Activated CD4-positive, alpha-beta T cell treated with anti-CD3 and anti-CD28 coated beads for 36 hours (primary cell): ENCODE measurements at regions of chr1 and their contacts with region 1.

Region 1: DNA sequence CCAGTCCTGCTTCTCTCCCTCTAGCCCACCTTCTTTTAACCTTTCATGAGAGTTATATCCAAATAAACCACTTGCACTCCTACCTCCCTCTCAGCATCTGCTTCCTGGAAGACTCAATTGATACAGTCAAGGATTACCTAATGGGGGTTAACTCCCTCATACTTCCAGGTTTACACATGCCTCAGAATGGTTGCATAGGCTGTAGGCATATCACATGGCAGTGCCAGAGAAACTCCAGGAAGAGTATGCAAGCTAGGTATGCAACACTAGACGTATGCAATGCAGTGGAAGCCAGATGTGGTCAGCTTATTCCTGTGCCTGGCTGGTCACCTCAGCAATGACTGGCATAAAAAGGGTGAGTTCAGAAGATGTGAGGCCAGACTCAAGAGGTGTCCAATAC is 32.7 kb upstream of the VANGL1 start:
- DNase-seq: no peak
- ATAC-seq: no peak
- H3K4me3 Mint-ChIP-seq: no peak overlapping the region
- H3K27ac Mint-ChIP-seq: no peak overlapping the region
- H3K4me1 Mint-ChIP-seq: no peaks in the 10 kb centered on the region
- H3K27me3 Mint-ChIP-seq: peaks cover 22% of the 10 kb centered on the region

Region 2: GRCh38 chr1:114472408-114472807 is 1136.6 kb before region 1 on chr1:
- CTCF ChIA-PET with region 1: no interaction called
- POLR2A ChIA-PET with region 1: no interaction called
- intact Hi-C with region 1: no loop called
- DNase-seq: no peak
- ATAC-seq: no peak
- H3K4me3 Mint-ChIP-seq: no peak overlapping the region
- H3K27ac Mint-ChIP-seq: no peak overlapping the region
- H3K4me1 Mint-ChIP-seq: peaks cover 68% of the 10 kb centered on the region
- H3K27me3 Mint-ChIP-seq: no peaks in the 10 kb centered on the region

Region 3: DNA sequence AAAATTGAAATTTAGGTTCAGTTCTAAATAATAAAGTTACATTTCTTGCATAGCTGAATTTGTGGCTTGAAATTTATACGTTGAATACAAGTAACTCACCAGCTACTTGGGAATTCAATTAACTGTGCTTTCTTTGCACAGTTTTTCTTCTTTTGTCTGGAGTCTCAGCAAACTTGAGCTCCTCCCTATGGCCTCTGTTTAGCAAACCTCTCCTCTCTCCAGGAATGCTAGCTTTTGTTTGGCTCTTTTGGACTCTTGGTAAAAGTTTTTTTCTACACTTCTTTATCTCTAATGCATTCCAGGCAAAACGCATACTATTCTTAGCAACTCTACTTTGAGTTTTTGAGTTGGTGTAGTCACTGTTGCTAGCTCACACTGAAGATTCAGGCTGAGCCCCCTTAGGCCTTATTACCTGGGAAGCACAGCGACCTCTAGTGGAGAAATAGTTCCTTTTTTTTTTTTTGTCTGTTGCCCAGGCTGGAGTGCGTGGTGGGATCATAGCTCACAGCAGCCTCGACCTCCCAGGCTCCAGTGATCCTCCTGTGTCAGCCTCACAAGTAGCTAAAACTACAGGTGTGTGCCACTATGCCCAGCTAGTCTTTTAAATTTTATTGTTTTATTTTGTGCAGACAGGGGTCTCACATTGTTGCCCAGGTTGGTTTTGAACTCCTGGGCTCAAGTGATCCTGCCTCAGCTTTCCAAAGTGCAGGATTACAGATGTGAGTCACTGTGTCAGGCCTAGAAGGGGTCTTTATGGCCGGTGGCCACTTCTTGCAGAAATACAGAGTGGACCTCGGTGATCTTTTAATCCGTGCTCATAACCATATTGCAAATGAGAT is 97.8 kb after region 1 on chr1:
- CTCF ChIA-PET with region 1: interaction called, 35 read pairs
- POLR2A ChIA-PET with region 1: no interaction called
- intact Hi-C with region 1: loop called (anchors 1 kb)
- DNase-seq: no peak
- ATAC-seq: peak; percentile 23
- H3K4me3 Mint-ChIP-seq: no peak overlapping the region
- H3K27ac Mint-ChIP-seq: no peak overlapping the region
- H3K4me1 Mint-ChIP-seq: no peaks in the 10 kb centered on the region
- H3K27me3 Mint-ChIP-seq: peaks cover 13% of the 10 kb centered on the region

Region 4: GRCh38 chr1:115771847-115772457 is 162.9 kb after region 1 on chr1:
- CTCF ChIA-PET with region 1: interaction called, 8 read pairs
- POLR2A ChIA-PET with region 1: no interaction called
- intact Hi-C with region 1: loop called (anchors 1 to 2 kb)
- DNase-seq: peak; percentile 19
- ATAC-seq: peak; percentile 53
- H3K4me3 Mint-ChIP-seq: no peak overlapping the region
- H3K27ac Mint-ChIP-seq: no peak overlapping the region
- H3K4me1 Mint-ChIP-seq: no peaks in the 10 kb centered on the region
- H3K27me3 Mint-ChIP-seq: peaks cover 5% of the 10 kb centered on the region

Region 5: DNA sequence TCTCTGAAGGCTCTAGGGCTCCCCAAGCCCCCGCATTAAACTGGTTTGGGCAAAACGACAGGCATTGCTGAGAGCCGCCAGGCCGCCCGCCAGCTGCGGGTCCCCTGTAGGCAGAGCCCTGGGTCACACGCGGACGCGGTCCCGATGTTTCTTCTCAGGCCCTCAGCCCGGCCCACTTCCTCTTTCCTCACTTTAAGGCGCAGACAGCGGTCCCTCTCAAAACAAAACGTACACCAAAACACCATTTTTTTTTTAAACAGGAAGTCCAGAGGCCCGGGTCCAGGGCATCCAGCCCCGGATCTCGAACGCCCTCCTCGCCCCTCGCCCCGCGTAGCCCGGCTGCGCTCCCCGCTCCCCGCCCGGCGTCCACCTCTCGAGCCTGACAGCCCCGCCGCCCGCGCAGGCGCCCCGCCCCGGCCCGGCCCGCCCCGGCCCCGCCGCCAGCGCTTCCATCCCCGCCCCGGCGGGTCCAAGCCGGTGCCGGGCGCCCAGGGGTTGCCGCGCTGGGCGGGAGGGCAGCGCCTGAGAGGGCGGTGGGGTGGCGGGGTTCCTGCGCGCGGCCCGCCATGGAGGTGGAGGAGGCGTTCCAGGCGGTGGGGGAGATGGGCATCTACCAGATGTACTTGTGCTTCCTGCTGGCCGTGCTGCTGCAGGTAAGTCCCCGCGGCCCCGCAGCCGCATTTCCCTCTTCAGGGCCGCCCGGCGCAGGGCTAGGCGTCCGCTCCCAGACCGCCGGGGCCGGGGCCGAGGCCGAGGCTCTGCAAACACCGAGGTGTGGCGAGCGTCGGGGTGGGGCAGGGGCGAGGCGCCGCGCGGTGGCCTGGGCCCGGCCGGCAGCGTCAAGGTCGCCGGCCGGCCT is 367.3 kb after region 1 on chr1 and contains the start of gene SLC22A15:
- CTCF ChIA-PET with region 1: no interaction called
- POLR2A ChIA-PET with region 1: no interaction called
- intact Hi-C with region 1: loop called (anchors 5 to 10 kb)
- DNase-seq: peak; percentile 55
- ATAC-seq: peak; percentile 69
- H3K4me3 Mint-ChIP-seq: peak within 1 kb of the TSS; percentile 80
- H3K27ac Mint-ChIP-seq: peak within 1 kb of the TSS; percentile 55
- H3K4me1 Mint-ChIP-seq: no peaks in the 10 kb centered on the region
- H3K27me3 Mint-ChIP-seq: peaks cover 44% of the 10 kb centered on the region
- total RNA-seq, gene SLC22A15: 0.23 to 0.25 TPM

Region 6: GRCh38 chr1:115980998-115981993 is 372.3 kb after region 1 on chr1:
- CTCF ChIA-PET with region 1: no interaction called
- POLR2A ChIA-PET with region 1: no interaction called
- intact Hi-C with region 1: loop called (anchors 5 to 10 kb)
- DNase-seq: peak; percentile 17
- ATAC-seq: no peak
- H3K4me3 Mint-ChIP-seq: no peak overlapping the region
- H3K27ac Mint-ChIP-seq: no peak overlapping the region
- H3K4me1 Mint-ChIP-seq: no peaks in the 10 kb centered on the region
- H3K27me3 Mint-ChIP-seq: peaks cover 24% of the 10 kb centered on the region